ENCODE measurements at regions of chr12 and their contacts with region 1.

Region 1: DNA sequence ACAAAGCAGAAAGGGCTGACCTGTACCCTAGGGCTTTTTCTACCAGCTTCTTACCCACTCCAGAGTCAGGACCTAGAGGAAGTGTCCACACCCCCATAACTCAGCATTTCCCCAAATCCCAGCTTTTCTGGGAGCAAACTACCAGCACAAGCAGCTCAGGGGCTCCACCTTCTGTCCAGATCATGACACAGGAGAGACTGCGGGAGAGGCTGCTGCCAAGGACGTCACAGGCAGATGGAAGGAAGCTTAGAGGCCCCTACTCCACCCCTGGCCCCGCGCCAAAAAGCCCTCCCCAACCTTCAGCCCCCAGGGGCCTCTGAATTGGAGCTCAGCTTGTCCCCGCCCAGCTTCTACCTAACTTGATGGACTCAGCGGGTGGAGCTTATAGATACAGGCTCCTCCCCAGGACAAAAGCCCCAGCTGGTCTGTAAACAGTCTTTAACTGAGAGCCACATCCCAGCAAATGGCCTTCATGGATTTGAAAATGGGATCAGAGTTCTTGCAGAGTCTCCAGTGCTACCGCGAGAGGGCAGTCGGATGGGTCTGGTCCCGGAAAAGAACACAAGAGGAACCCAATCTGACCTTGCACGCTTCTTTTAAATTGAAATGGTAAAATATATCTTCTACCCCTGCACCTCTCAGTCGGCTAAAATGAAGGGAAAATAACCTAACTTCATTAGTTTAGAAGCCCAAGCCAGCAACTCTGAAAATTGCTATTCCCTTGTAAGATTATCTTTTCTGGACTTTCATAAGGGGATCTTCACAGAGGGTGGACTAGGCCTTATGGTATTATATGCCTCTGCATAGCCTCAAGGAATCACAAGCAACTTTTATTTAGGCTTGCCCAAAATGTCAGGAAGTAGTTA is 6.8 kb upstream of the BAZ2A start:
- DNase-seq: peak; percentile 96
- H3K4me3 Mint-ChIP-seq: peak overlapping the region; percentile 99
- H3K27ac Mint-ChIP-seq: peak overlapping the region; percentile 97
- H3K4me1 Mint-ChIP-seq: peaks cover 66% of the 10 kb centered on the region
- H3K27me3 Mint-ChIP-seq: no peaks in the 10 kb centered on the region

Region 2: GRCh38 chr12:56461235-56462159 is 175.4 kb before region 1 on chr12:
- CTCF ChIA-PET with region 1: no interaction called
- DNase-seq: no peak
- H3K4me3 Mint-ChIP-seq: no peak overlapping the region
- H3K27ac Mint-ChIP-seq: no peak overlapping the region
- H3K4me1 Mint-ChIP-seq: peaks cover 7% of the 10 kb centered on the region
- H3K27me3 Mint-ChIP-seq: peaks cover 4% of the 10 kb centered on the region

Region 3: GRCh38 chr12:56593909-56594621 is 42.8 kb before region 1 on chr12:
- CTCF ChIA-PET with region 1: interaction called, 34 read pairs
- DNase-seq: peak; percentile 72
- H3K4me3 Mint-ChIP-seq: no peak overlapping the region
- H3K27ac Mint-ChIP-seq: no peak overlapping the region
- H3K4me1 Mint-ChIP-seq: peaks cover 4% of the 10 kb centered on the region
- H3K27me3 Mint-ChIP-seq: peaks cover 6% of the 10 kb centered on the region

Region 4: DNA sequence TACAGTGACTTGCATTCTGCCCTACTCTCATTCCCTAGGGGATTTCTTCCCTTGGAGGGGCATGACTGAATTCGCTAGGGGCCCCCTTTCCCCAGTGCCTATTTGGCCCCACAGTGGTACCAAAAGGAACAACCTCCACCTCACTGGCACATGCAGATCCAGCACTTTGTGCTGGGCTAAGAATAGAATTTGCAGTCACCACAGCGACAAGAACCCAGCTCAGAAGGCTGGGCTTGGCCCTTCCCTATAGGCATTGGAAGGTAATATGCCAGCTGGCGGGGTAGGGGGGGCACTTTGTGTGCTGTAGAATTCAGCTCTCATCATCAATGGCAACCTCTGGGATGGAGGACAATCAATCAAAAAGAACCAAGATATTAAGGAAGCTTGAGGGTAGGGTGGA is 20.7 kb before region 1 on chr12:
- CTCF ChIA-PET with region 1: interaction called, 27 read pairs
- DNase-seq: no peak
- H3K4me3 Mint-ChIP-seq: no peak overlapping the region
- H3K27ac Mint-ChIP-seq: no peak overlapping the region
- H3K4me1 Mint-ChIP-seq: peaks cover 2% of the 10 kb centered on the region
- H3K27me3 Mint-ChIP-seq: no peaks in the 10 kb centered on the region

Region 5: DNA sequence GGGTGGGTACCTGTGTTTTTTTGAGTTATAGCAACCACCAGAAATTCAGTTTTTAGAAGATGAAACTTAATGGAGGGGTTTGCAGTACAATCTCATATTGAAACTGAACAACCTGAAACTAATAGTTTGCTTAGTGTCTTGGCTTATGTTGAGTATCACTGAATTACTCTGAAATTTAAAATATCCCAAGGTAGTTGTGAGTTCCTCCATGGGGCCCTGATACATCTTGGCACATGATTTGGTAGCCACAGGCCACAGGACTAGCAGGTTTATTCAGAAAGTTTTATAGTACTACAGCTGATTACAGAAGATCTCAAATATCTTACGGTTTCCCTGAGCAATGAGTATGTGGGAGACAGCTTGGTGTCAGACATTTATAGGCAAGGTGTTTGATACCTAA is 40.8 kb after region 1 on chr12:
- CTCF ChIA-PET with region 1: interaction called, 10 read pairs
- DNase-seq: no peak
- H3K4me3 Mint-ChIP-seq: no peak overlapping the region
- H3K27ac Mint-ChIP-seq: no peak overlapping the region
- H3K4me1 Mint-ChIP-seq: peaks cover 55% of the 10 kb centered on the region
- H3K27me3 Mint-ChIP-seq: no peaks in the 10 kb centered on the region

Region 6: DNA sequence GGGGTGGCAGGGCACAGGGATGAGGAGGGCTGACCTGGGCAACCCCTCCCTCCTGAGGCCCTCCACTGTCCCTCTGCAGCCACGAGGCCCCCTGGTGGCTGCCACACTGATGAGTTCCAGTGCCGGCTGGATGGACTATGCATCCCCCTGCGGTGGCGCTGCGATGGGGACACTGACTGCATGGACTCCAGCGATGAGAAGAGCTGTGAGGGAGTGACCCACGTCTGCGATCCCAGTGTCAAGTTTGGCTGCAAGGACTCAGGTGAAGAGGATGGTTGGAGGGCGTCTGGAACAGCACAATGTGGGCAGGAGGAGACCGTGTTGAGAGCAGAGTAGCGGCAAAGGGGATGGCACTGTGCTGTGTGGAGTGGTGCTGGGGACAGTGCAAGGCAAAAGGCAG is 536.2 kb after region 1 on chr12:
- CTCF ChIA-PET with region 1: no interaction called
- DNase-seq: peak; percentile 38
- H3K4me3 Mint-ChIP-seq: no peak overlapping the region
- H3K27ac Mint-ChIP-seq: no peak overlapping the region
- H3K4me1 Mint-ChIP-seq: no peaks in the 10 kb centered on the region
- H3K27me3 Mint-ChIP-seq: no peaks in the 10 kb centered on the region